ENCODE measurements at regions of chr6 and their contacts with region 1.

Region 1: DNA sequence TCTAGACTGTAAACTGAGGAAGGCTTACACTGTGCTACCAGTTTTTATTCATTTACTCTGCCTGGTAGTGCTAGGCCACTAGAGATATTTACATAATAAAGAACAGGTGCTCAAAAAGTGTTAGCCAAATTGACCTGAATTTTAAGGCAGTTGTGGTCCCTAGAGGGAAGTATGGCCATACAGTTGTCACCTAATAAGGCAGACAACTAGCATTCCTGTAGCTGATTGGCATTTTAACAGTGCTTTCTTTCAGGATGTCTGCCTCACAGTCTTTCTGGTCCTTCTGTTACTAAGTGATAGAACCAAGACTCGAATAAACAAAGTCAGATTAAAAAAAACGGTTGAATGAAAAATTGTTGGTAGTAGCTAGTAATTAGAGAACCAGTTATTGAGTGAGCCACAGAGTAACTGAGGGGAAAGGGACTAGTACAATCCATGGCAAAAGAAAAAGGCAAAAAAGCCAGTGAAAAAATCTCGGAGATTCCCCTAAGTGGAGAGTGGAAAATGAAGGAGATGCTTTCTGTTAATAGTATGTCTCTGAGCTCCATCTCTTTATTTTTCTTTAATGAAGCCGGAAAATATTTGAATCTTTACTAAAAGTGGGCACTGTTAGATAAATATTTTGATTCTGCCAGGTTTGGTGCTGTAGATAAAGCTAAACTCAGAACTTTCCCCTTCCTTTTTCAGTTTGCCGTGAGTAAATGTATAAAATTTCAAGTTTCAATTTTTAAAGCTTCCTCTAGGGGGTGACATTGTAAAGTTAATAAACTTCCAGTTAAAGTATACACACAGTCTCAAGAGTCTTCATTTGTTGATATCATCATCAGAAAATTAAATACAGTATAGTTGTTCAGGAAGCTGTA is 9.1 kb downstream of the VTA1 start:
- DNase-seq: no peak
- H3K4me3 ChIP-seq: no peak overlapping the region
- H3K27ac ChIP-seq: no peak overlapping the region
- H3K27me3 ChIP-seq: no peaks in the 10 kb centered on the region
- CTCF ChIP-seq: peak; percentile 38; the same call in 1 of the 2 replicates

Region 2: GRCh38 chr6:142071981-142072380 is 84.1 kb before region 1 on chr6:
- CTCF ChIA-PET with region 1: no interaction called
- POLR2A ChIA-PET with region 1: no interaction called
- DNase-seq: no peak
- H3K4me3 ChIP-seq: no peak overlapping the region
- H3K27ac ChIP-seq: no peak overlapping the region
- H3K27me3 ChIP-seq: no peaks in the 10 kb centered on the region
- CTCF ChIP-seq: peak; percentile 17; the same call in 1 of the 2 replicates

Region 3: DNA sequence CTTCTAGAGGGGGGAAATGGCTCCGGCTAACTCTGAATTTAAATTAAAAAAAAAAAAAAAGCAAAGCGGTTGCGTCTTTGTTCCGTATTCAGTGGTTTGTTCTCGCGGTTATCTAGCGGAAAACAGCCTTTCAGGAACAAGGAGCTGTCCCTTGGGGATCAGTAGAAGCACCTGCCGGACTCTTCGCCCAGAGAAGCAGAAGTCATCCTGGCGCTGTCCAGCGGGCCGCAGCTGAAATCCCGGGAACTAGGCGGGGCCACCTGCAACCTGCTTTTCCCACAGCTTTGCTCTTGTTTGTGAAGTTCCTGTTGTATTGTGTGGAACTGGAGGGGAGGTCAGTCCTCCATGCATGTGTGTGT is 67.3 kb before region 1 on chr6:
- CTCF ChIA-PET with region 1: no interaction called
- POLR2A ChIA-PET with region 1: no interaction called
- DNase-seq: peak; percentile 3
- H3K4me3 ChIP-seq: no peak overlapping the region
- H3K27ac ChIP-seq: no peak overlapping the region
- H3K27me3 ChIP-seq: peaks cover 9% of the 10 kb centered on the region
- CTCF ChIP-seq: no peak

Region 4: DNA sequence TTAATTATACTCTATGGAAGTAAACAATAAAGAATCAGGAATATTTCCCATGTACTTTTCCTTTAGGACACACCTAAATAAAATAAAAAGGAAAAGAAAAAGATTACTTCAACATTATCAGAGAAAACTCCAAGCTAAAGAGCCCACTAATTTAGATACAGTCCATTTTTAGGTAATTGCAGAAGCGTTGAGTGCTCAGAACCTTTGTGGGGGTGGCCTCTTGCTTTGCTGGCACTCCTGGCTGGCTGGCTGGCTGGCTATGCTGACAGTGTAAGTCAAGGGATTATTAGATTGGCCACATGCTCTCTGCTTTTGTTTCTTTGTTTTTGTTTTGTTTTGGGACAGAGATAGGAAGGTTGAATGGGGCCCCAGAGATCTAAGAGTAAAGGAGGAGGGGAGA is 23.5 kb before region 1 on chr6 and contains the start of gene GJE1:
- CTCF ChIA-PET with region 1: no interaction called
- POLR2A ChIA-PET with region 1: no interaction called
- DNase-seq: no peak
- H3K4me3 ChIP-seq: no peak within 1 kb of the TSS
- H3K27ac ChIP-seq: no peak within 1 kb of the TSS
- H3K27me3 ChIP-seq: no peaks in the 10 kb centered on the region
- CTCF ChIP-seq: no peak
- polyA plus RNA-seq, gene GJE1: not detected in 2 replicates

Region 5: DNA sequence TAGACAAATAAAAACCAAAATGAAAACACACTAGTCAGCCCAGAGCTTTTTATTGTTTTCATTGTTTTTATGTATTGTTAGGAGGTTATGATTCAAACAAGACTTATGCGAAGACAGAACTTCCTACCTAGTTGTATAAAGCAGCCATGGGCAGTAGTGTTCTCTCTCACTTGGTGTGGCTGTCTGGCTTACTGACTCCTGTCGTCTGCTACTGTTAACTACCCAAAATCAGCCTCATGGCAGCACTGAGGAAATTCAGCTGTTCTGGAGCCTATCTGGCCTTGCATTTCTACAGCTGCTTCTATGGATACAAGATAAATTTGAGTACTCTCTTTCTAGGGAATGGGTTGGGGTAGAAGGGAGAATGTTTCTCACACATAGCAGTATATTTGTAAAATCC is 11.4 kb after region 1 on chr6:
- CTCF ChIA-PET with region 1: interaction called, 22 read pairs
- POLR2A ChIA-PET with region 1: no interaction called
- DNase-seq: no peak
- H3K4me3 ChIP-seq: no peak overlapping the region
- H3K27ac ChIP-seq: no peak overlapping the region
- H3K27me3 ChIP-seq: no peaks in the 10 kb centered on the region
- CTCF ChIP-seq: no peak

Region 6: GRCh38 chr6:142195862-142196541 is 39.9 kb after region 1 on chr6:
- CTCF ChIA-PET with region 1: interaction called, 19 read pairs
- POLR2A ChIA-PET with region 1: no interaction called
- DNase-seq: no peak
- H3K4me3 ChIP-seq: no peak overlapping the region
- H3K27ac ChIP-seq: no peak overlapping the region
- H3K27me3 ChIP-seq: no peaks in the 10 kb centered on the region
- CTCF ChIP-seq: no peak

Region 7: GRCh38 chr6:142387997-142388815 is 232.1 kb after region 1 on chr6:
- CTCF ChIA-PET with region 1: interaction called, 45 read pairs
- POLR2A ChIA-PET with region 1: no interaction called
- DNase-seq: no peak
- H3K4me3 ChIP-seq: no peak overlapping the region
- H3K27ac ChIP-seq: no peak overlapping the region
- H3K27me3 ChIP-seq: no peaks in the 10 kb centered on the region
- CTCF ChIP-seq: peak; percentile 78

Measured in AG04450 (cell line).